GM12878 (cell line): ENCODE measurements at regions of chr1 and their contacts with region 1.

Region 1: DNA sequence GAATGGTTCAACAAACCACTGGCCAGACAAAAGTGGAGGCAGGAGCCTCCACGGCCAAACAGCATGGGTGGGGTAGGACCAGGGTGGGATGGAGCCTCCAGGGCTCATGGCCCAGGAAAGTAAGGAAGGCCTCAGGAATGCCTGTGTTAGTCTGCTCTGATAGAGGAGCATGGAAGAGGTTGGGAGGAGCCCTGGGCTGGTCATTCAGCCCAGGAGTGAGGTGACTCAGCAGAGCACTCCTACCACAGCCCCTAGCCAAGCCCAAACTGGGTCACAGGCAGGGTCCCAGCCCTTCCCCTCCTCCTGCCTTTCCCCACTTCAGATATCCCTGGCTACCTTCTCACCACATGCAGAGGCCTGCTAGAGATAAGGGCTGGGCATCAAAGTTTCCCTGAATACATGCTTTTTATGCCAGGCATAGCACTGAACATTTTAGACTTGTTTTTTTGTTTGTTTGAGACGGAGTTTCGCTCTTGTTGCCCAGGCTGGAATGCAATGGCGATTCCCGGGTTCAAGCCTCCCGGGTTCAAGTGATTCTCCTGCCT is 3.1 kb upstream of the SHISA4 start:
- DNase-seq: no peak
- ATAC-seq: no peak
- H3K4me3 ChIP-seq: no peak overlapping the region
- H3K27ac ChIP-seq: no peak overlapping the region
- H3K4me1 ChIP-seq: peaks cover 5% of the 10 kb centered on the region; the same call in 1 of the 2 replicates
- H3K27me3 ChIP-seq: peaks cover 2 to 11% of the 10 kb centered on the region in 2 experiments; a peak in 3 of 4 replicates
- CTCF ChIP-seq: no peak
- EP300 ChIP-seq: no peak
- POLR2A ChIP-seq: no peak
- RAD21 ChIP-seq: no peak

Region 2: GRCh38 chr1:202122639-202123335 is 237.2 kb after region 1 on chr1 and contains the start of gene GPR37L1:
- CTCF ChIA-PET with region 1: interaction called, 5 read pairs
- POLR2A ChIA-PET with region 1: no interaction called
- RAD21 ChIA-PET with region 1: interaction called, 3 read pairs
- SMC1A ChIA-PET with region 1: interaction called, 3 read pairs
- in situ Hi-C with region 1: loop called (anchors 5 kb)
- intact Hi-C with region 1: no loop called
- DNase-seq: no peak
- ATAC-seq: no peak
- H3K4me3 ChIP-seq: no peak within 1 kb of the TSS
- H3K27ac ChIP-seq: no peak within 1 kb of the TSS
- H3K4me1 ChIP-seq: no peaks in the 10 kb centered on the region
- H3K27me3 ChIP-seq: peaks cover 0 to 2% of the 10 kb centered on the region in 2 experiments
- CTCF ChIP-seq: no peak
- EP300 ChIP-seq: no peak
- POLR2A ChIP-seq: no peak
- RAD21 ChIP-seq: no peak
- polyA plus RNA-seq, gene GPR37L1: under 0.01 to 0.02 TPM